Endothelial cell of umbilical vein (primary cell): ENCODE measurements at regions of chr10 and their contacts with region 1.

Region 1: DNA sequence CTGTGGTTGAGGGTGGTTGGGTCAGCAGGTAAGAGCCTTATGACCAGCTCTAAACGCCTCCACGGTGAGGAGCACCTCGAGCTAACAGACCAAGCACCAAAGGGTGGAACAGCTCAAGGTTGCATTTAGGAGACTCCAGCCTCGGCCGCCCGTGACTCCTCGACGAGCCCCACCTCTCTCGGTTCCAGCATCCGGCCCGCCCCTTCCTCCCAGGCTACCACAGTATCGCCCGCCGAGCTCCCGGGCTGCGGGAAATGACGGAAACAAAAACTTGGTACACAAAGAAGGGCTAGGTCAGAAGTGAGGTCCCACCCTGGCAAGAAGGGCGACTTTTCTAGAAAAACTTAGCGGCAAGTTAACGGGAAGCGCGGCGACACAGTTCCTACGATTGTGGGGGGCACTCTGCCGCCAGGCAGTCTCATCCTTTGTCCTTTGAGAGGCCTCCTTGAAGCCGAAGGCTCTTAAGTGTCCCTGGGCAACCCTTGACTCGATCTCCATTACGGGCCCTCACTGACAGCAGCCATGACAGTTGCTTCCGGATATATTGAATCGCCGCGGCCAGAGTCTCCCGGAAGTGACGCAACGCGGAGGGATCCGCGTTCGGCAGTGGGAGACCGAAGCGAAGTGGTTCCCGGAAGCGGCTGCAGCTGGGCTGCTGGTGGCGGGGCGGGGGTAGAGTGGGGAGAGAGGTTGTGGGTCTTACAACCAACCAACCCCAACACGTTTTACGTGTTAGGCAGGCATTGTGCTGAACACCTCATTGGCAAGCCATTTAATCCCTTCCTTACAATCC is 40.2 kb upstream of the ZNF518A start:
- DNase-seq: peak; percentile 86
- H3K4me3 ChIP-seq: peak overlapping the region; percentile 40 to 67 (median 67)
- H3K27ac ChIP-seq: peak overlapping the region; percentile 84
- H3K4me1 ChIP-seq: peaks cover 4% of the 10 kb centered on the region
- H3K27me3 ChIP-seq: peaks cover 19 to 23% of the 10 kb centered on the region in 2 experiments
- CTCF ChIP-seq: no peak
- POLR2A ChIP-seq: peak; percentile 66

Region 2: DNA sequence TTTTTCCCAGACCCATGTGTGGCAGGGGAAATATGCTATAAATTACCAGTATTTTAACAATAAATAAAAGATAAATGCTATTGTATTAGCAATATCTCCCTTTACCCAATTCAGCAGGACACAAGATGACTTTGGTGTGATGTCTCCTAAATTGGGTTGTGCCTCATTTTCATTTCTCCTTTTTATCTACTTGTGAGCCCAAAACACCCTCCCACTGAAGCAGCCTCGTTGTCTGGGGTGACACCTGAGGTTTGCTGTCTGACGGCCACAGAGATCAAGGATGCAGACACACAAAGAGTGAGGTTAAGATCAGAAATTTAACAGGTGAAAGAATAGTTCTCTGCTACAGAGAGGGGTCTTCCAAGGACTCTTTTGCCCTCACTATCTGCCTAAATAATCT is 209.2 kb before region 1 on chr10:
- CTCF ChIA-PET with region 1: no interaction called
- POLR2A ChIA-PET with region 1: no interaction called
- dilution Hi-C with region 1: no loop called
- intact Hi-C with region 1: no loop called
- DNase-seq: no peak
- H3K4me3 ChIP-seq: no peak overlapping the region
- H3K27ac ChIP-seq: no peak overlapping the region
- H3K4me1 ChIP-seq: no peaks in the 10 kb centered on the region
- H3K27me3 ChIP-seq: no peaks in the 10 kb centered on the region
- CTCF ChIP-seq: no peak
- POLR2A ChIP-seq: no peak

Region 3: GRCh38 chr10:96061232-96061631 is 28.6 kb before region 1 on chr10:
- CTCF ChIA-PET with region 1: interaction called, 4 read pairs
- POLR2A ChIA-PET with region 1: interaction called, 8 read pairs
- dilution Hi-C with region 1: no loop called
- intact Hi-C with region 1: loop called (anchors 1 kb)
- DNase-seq: no peak
- H3K4me3 ChIP-seq: no peak overlapping the region
- H3K27ac ChIP-seq: no peak overlapping the region
- H3K4me1 ChIP-seq: peaks cover 6% of the 10 kb centered on the region
- H3K27me3 ChIP-seq: no peaks in the 10 kb centered on the region
- CTCF ChIP-seq: no peak
- POLR2A ChIP-seq: no peak

Region 4: GRCh38 chr10:96129387-96130325 is 39.8 kb after region 1 on chr10 and contains the start of gene ZNF518A:
- CTCF ChIA-PET with region 1: interaction called, 5 read pairs
- POLR2A ChIA-PET with region 1: interaction called, 22 read pairs
- dilution Hi-C with region 1: no loop called
- intact Hi-C with region 1: loop called (anchors 1 kb)
- DNase-seq: peak; percentile 92
- H3K4me3 ChIP-seq: peak within 1 kb of the TSS; percentile 38 to 96 (median 61)
- H3K27ac ChIP-seq: peak within 1 kb of the TSS; percentile 91
- H3K4me1 ChIP-seq: peaks cover 15% of the 10 kb centered on the region
- H3K27me3 ChIP-seq: no peaks in the 10 kb centered on the region
- CTCF ChIP-seq: no peak
- POLR2A ChIP-seq: peak; percentile 77
- total RNA-seq, gene ZNF518A: 11.9 and 12.1 TPM in 2 replicates

Region 5: GRCh38 chr10:96153070-96153469 is 63.2 kb after region 1 on chr10:
- CTCF ChIA-PET with region 1: no interaction called
- POLR2A ChIA-PET with region 1: no interaction called
- dilution Hi-C with region 1: no loop called
- intact Hi-C with region 1: no loop called
- DNase-seq: no peak
- H3K4me3 ChIP-seq: no peak overlapping the region
- H3K27ac ChIP-seq: no peak overlapping the region
- H3K4me1 ChIP-seq: no peaks in the 10 kb centered on the region
- H3K27me3 ChIP-seq: no peaks in the 10 kb centered on the region
- CTCF ChIP-seq: no peak
- POLR2A ChIP-seq: no peak